Naive thymus-derived CD4-positive, alpha-beta T cell (primary cell): ENCODE measurements at regions of chr19 and their contacts with region 1.

Region 1: GRCh38 chr19:48738557-48739399 is 1.6 kb downstream of the RASIP1 start:
- DNase-seq: peak; percentile 73 to 95 (median 84)
- ATAC-seq: peak; percentile 97
- H3K4me3 ChIP-seq: peak overlapping the region; percentile 53
- H3K4me3 Mint-ChIP-seq: peak overlapping the region in 9 of 10 donors; percentile 48 to 74 (median 66)
- H3K27ac ChIP-seq: peak overlapping the region; percentile 41
- H3K27ac Mint-ChIP-seq: peak overlapping the region in 7 of 9 donors; percentile 17 to 68 (median 52)
- H3K4me1 ChIP-seq: peaks cover 4 to 26% of the 10 kb centered on the region in 2 donors
- H3K4me1 Mint-ChIP-seq: peaks cover 7 to 22% (median 17%) of the 10 kb centered on the region in 7 donors
- H3K27me3 ChIP-seq: no peaks in the 10 kb centered on the region
- H3K27me3 Mint-ChIP-seq: peaks cover 0 to 20% (median 0%) of the 10 kb centered on the region in 5 donors

Region 2: GRCh38 chr19:48321622-48322591 is 416.9 kb before region 1 on chr19:
- CTCF ChIA-PET with region 1: no interaction called
- POLR2A ChIA-PET with region 1: no interaction called
- intact Hi-C with region 1: no loop called
- DNase-seq: peak; percentile 99 to 100 (median 100)
- ATAC-seq: peak; percentile 87
- H3K4me3 ChIP-seq: peak overlapping the region; percentile 79
- H3K4me3 Mint-ChIP-seq: peak overlapping the region; percentile 90 to 99 (median 96)
- H3K27ac ChIP-seq: peak overlapping the region; percentile 100
- H3K27ac Mint-ChIP-seq: peak overlapping the region; percentile 96 to 100 (median 99)
- H3K4me1 ChIP-seq: peaks cover 45 to 47% of the 10 kb centered on the region in 2 donors
- H3K4me1 Mint-ChIP-seq: peaks cover 36 to 63% (median 51%) of the 10 kb centered on the region in 7 donors
- H3K27me3 ChIP-seq: no peaks in the 10 kb centered on the region
- H3K27me3 Mint-ChIP-seq: peaks cover 0 to 2% (median 0%) of the 10 kb centered on the region in 5 donors

Region 3: GRCh38 chr19:48660854-48661731 is 77.7 kb before region 1 on chr19:
- CTCF ChIA-PET with region 1: no interaction called
- POLR2A ChIA-PET with region 1: no interaction called
- intact Hi-C with region 1: loop called in 1 of 2 experiments (anchors 5 kb)
- DNase-seq: peak; percentile 51 to 90 (median 86)
- ATAC-seq: peak; percentile 95
- H3K4me3 ChIP-seq: peak overlapping the region; percentile 28
- H3K4me3 Mint-ChIP-seq: peak overlapping the region; percentile 63 to 86 (median 80)
- H3K27ac ChIP-seq: peak overlapping the region; percentile 72
- H3K27ac Mint-ChIP-seq: peak overlapping the region; percentile 17 to 98 (median 94)
- H3K4me1 ChIP-seq: peaks cover 6 to 9% of the 10 kb centered on the region in 2 donors
- H3K4me1 Mint-ChIP-seq: peaks cover 7 to 16% (median 10%) of the 10 kb centered on the region in 7 donors
- H3K27me3 ChIP-seq: no peaks in the 10 kb centered on the region
- H3K27me3 Mint-ChIP-seq: peaks cover 0 to 11% (median 0%) of the 10 kb centered on the region in 5 donors

Region 4: GRCh38 chr19:48698046-48698445 is 40.7 kb before region 1 on chr19:
- CTCF ChIA-PET with region 1: no interaction called
- POLR2A ChIA-PET with region 1: no interaction called
- intact Hi-C with region 1: loop called in 1 of 2 experiments (anchors 5 kb)
- DNase-seq: no peak
- ATAC-seq: no peak
- H3K4me3 ChIP-seq: no peak overlapping the region
- H3K4me3 Mint-ChIP-seq: no peak overlapping the region
- H3K27ac ChIP-seq: no peak overlapping the region
- H3K27ac Mint-ChIP-seq: no peak overlapping the region
- H3K4me1 ChIP-seq: peaks cover 0 to 6% of the 10 kb centered on the region in 2 donors
- H3K4me1 Mint-ChIP-seq: peaks cover 7 to 18% (median 11%) of the 10 kb centered on the region in 7 donors
- H3K27me3 ChIP-seq: no peaks in the 10 kb centered on the region
- H3K27me3 Mint-ChIP-seq: peaks cover 0 to 21% (median 10%) of the 10 kb centered on the region in 5 donors

Region 5: DNA sequence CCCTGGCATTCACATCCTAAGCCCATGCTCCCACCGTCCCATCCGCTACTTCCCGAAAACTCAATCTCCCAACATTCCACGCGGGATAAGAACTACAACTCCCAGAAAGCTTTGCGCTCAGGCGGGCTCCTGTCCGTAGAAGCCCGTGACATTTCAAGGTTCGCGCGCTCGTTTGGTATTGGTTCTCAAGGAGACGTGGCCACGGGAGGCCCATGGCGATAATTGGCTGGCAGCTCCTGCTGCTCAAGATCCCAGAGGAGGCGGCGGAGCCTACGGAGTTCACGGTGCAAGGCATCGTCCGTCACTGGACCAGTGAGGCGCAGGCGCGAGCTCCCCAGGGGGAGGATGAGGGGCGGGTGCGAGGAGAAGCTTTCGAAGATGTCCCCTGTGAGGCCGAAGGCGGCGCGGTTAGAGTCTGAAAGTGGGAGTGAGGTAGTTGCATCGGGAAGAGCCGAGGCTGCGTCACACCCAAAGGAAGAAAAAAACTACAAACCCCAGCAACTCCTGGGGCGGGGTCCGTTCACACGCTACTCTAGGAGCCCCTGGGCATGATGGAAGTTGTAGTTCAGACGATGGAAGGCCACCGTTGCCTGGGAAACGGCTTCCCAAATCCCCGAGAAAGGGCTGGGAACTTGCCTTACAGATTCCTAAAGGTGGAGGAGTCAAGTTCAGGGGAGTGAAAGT is 18.0 kb before region 1 on chr19:
- CTCF ChIA-PET with region 1: no interaction called
- POLR2A ChIA-PET with region 1: interaction called, 9 read pairs
- intact Hi-C with region 1: loop called in 1 of 2 experiments (anchors 1 kb)
- DNase-seq: peak; percentile 77 to 93 (median 89)
- ATAC-seq: peak; percentile 91
- H3K4me3 ChIP-seq: peak overlapping the region; percentile 92
- H3K4me3 Mint-ChIP-seq: peak overlapping the region; percentile 80 to 99 (median 97)
- H3K27ac ChIP-seq: peak overlapping the region; percentile 80
- H3K27ac Mint-ChIP-seq: peak overlapping the region; percentile 98 to 100 (median 99)
- H3K4me1 ChIP-seq: peaks cover 5 to 17% of the 10 kb centered on the region in 2 donors
- H3K4me1 Mint-ChIP-seq: peaks cover 19 to 30% (median 25%) of the 10 kb centered on the region in 7 donors
- H3K27me3 ChIP-seq: no peaks in the 10 kb centered on the region
- H3K27me3 Mint-ChIP-seq: no peaks in the 10 kb centered on the region

Region 6: GRCh38 chr19:48780631-48781391 is 42.0 kb after region 1 on chr19:
- CTCF ChIA-PET with region 1: interaction called, 10 read pairs
- POLR2A ChIA-PET with region 1: no interaction called
- intact Hi-C with region 1: no loop called
- DNase-seq: no peak
- ATAC-seq: peak; percentile 43
- H3K4me3 ChIP-seq: no peak overlapping the region
- H3K4me3 Mint-ChIP-seq: no peak overlapping the region
- H3K27ac ChIP-seq: no peak overlapping the region
- H3K27ac Mint-ChIP-seq: no peak overlapping the region
- H3K4me1 ChIP-seq: no peaks in the 10 kb centered on the region
- H3K4me1 Mint-ChIP-seq: peaks cover 0 to 4% (median 3%) of the 10 kb centered on the region in 7 donors
- H3K27me3 ChIP-seq: no peaks in the 10 kb centered on the region
- H3K27me3 Mint-ChIP-seq: peaks cover 0 to 7% (median 4%) of the 10 kb centered on the region in 5 donors